Activated CD8-positive, alpha-beta memory T cell treated with anti-CD3 and anti-CD28 coated beads, Interleukin-2, amount 10 ng/mL, durations not matched to agents 7 days and 5 days (primary cell): ENCODE measurements at regions of chr1 and their contacts with region 1.

Region 1: DNA sequence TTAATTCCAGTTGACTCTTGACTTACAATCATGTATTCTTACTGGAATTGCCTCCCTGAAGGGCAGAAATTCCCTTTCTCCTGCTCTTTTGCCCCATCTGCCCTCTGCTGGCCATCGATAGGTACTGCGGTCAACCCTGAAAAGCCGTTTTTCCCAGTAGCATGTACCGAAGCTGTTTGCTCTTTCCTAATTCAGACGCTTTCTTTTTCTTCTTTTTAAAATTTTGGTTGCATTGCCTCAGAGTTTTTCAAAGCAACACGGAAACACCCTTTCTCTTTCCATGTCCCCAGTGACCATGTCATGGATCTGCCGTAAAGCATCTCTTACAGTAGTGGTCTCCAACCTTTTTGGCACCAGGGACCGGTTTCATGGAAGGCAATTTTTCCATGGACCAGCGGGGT is 164.2 kb upstream of the C1orf21 start:
- DNase-seq: peak; percentile 48
- ATAC-seq: no peak
- H3K4me3 Mint-ChIP-seq: no peak overlapping the region
- H3K27ac Mint-ChIP-seq: no peak overlapping the region
- H3K4me1 Mint-ChIP-seq: no peaks in the 10 kb centered on the region
- H3K27me3 Mint-ChIP-seq: no peaks in the 10 kb centered on the region

Region 2: DNA sequence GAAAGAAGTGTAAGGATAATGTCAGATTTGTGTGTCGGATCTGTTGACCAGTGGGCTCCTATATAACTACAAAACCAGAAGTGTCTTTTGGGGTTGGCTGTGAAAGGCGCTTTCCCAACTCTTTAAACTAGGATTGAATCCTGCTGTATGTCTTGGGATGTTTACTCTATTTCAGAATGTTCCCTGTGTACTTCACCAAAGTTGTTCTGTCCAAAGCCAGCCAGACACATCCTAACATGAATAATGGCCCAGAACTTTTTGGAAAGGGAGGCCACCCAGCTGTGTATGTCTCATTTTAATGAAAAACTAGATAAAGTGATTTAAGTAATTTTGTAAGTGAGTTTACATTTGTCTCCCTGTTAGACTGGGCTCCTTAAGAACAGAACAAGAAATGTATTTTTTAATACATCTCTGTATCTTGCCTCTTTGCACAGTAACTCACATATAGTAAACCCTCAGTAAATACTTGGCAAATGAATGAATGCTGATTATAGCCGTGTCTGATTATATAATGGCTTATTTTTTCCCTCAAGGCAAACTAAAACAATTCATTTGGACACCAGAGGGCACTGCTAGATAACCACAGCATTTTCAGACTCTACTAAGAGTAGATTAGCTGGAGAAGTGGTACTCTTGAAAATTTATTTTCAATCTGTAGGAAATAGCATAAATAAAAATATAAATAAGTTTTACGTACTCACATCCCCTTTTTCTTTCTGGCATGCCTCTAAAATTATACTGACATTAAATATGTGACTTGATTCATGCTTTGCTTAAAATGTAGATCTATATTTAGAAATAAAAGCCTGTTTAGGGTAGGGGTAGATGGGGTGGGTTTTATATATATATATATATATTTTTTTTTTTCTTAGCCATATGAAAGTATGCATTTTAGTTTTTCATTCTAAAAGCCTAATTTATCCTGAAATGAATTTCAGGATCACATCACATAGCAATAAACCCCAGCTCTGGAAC is 147.3 kb before region 1 on chr1:
- CTCF ChIA-PET with region 1: interaction called, 22 read pairs
- DNase-seq: no peak
- ATAC-seq: peak; percentile 60
- H3K4me3 Mint-ChIP-seq: no peak overlapping the region
- H3K27ac Mint-ChIP-seq: no peak overlapping the region
- H3K4me1 Mint-ChIP-seq: peaks cover 5% of the 10 kb centered on the region
- H3K27me3 Mint-ChIP-seq: no peaks in the 10 kb centered on the region

Region 3: GRCh38 chr1:184260382-184260781 is 37.7 kb after region 1 on chr1:
- CTCF ChIA-PET with region 1: no interaction called
- DNase-seq: no peak
- ATAC-seq: no peak
- H3K4me3 Mint-ChIP-seq: no peak overlapping the region
- H3K27ac Mint-ChIP-seq: no peak overlapping the region
- H3K4me1 Mint-ChIP-seq: no peaks in the 10 kb centered on the region
- H3K27me3 Mint-ChIP-seq: peaks cover 26% of the 10 kb centered on the region